Naive thymus-derived CD4-positive, alpha-beta T cell (primary cell): ENCODE measurements at regions of chr10 and their contacts with region 1.

Region 1: DNA sequence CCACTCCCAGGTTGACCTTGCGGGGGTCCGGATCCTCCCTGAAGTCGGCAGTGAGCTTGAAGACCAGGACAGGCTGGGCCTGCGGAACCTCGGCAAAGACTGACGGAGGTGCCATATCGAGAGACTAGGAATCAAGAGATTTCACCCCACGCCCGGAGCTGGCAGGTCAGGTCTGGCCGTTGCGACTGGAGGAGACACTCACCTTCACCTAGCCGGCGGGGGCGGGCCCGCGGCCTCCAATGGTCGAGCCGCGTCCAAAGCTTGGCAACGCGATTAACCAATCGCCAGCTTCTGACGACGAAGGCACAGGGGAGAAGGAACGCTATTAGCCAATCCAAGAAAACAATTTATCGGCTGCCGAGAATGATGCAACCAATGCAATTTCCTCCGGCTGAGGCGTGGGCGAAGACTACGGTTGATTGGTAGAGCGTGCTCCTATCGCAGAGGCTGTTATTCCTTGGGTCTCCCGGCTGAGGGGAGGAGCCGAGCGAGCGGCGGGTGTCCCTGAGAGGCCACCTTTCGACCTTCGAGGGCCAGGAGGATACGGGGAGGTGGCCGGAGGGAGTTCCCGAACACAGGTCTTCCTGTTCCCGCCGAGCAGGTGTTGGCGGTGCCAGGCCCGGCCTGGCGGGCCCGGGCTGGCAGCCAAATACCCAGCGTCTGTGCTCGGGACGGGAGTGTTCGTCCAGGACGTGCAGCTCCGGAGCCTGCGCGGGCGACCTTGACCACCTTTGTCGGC is at the start of gene GOT1:
- DNase-seq: peak; percentile 72 to 95 (median 94)
- ATAC-seq: peak; percentile 97
- H3K4me3 ChIP-seq: peak within 1 kb of the TSS; percentile 81
- H3K4me3 Mint-ChIP-seq: peak within 1 kb of the TSS; percentile 94 to 100 (median 98)
- H3K27ac ChIP-seq: peak within 1 kb of the TSS; percentile 90
- H3K27ac Mint-ChIP-seq: peak within 1 kb of the TSS; percentile 88 to 97 (median 94)
- H3K4me1 ChIP-seq: peaks cover 5 to 9% of the 10 kb centered on the region in 2 donors
- H3K4me1 Mint-ChIP-seq: peaks cover 19 to 53% (median 44%) of the 10 kb centered on the region in 7 donors
- H3K27me3 ChIP-seq: no peaks in the 10 kb centered on the region
- H3K27me3 Mint-ChIP-seq: no peaks in the 10 kb centered on the region
- total RNA-seq, gene GOT1: 8.0 to 22.2 (median 10.2) TPM

Region 2: GRCh38 chr10:99395750-99396445 is 34.7 kb before region 1 on chr10:
- CTCF ChIA-PET with region 1: no interaction called
- POLR2A ChIA-PET with region 1: no interaction called
- intact Hi-C with region 1: loop called (anchors 2 kb)
- DNase-seq: no peak
- ATAC-seq: no peak
- H3K4me3 ChIP-seq: no peak overlapping the region
- H3K4me3 Mint-ChIP-seq: no peak overlapping the region
- H3K27ac ChIP-seq: peak overlapping the region; percentile 39
- H3K27ac Mint-ChIP-seq: peak overlapping the region in 7 of 9 donors; percentile 7 to 74 (median 60)
- H3K4me1 ChIP-seq: no peaks in the 10 kb centered on the region
- H3K4me1 Mint-ChIP-seq: peaks cover 0 to 15% (median 9%) of the 10 kb centered on the region in 7 donors
- H3K27me3 ChIP-seq: no peaks in the 10 kb centered on the region
- H3K27me3 Mint-ChIP-seq: no peaks in the 10 kb centered on the region

Region 3: GRCh38 chr10:99659031-99659867 is 228.6 kb after region 1 on chr10 and contains the start of gene ENTPD7:
- CTCF ChIA-PET with region 1: no interaction called
- POLR2A ChIA-PET with region 1: no interaction called
- intact Hi-C with region 1: loop called (anchors 1 to 2 kb)
- DNase-seq: peak; percentile 66 to 90 (median 77)
- ATAC-seq: peak; percentile 99
- H3K4me3 ChIP-seq: peak within 1 kb of the TSS; percentile 72
- H3K4me3 Mint-ChIP-seq: peak within 1 kb of the TSS; percentile 80 to 95 (median 92)
- H3K27ac ChIP-seq: peak within 1 kb of the TSS; percentile 69
- H3K27ac Mint-ChIP-seq: peak within 1 kb of the TSS; percentile 5 to 88 (median 73)
- H3K4me1 ChIP-seq: no peaks in the 10 kb centered on the region
- H3K4me1 Mint-ChIP-seq: peaks cover 17 to 32% (median 21%) of the 10 kb centered on the region in 7 donors
- H3K27me3 ChIP-seq: no peaks in the 10 kb centered on the region
- H3K27me3 Mint-ChIP-seq: peaks cover 0 to 25% (median 15%) of the 10 kb centered on the region in 5 donors
- total RNA-seq, gene ENTPD7: 2.5 to 6.6 (median 3.4) TPM